ENCODE measurements at regions of chrX and their contacts with region 1.

Region 1: GRCh38 chrX:41180194-41180908 is 95.1 kb downstream of the USP9X start:
- DNase-seq: peak; percentile 69
- ATAC-seq: peak; percentile 68
- H3K4me3 ChIP-seq: peak overlapping the region in 1 of 5 experiments; percentile 15
- H3K4me3 Mint-ChIP-seq: peak overlapping the region; percentile 56
- H3K27ac ChIP-seq: peak overlapping the region; percentile 74 to 86
- H3K27ac Mint-ChIP-seq: peak overlapping the region; percentile 73
- H3K4me1 ChIP-seq: peaks cover 27 to 30% of the 10 kb centered on the region in 2 donors
- H3K4me1 Mint-ChIP-seq: peaks cover 43% of the 10 kb centered on the region
- H3K27me3 ChIP-seq: no peaks in the 10 kb centered on the region
- H3K27me3 Mint-ChIP-seq: no peaks in the 10 kb centered on the region
- CTCF ChIP-seq: peak; percentile 71

Region 2: GRCh38 chrX:41236629-41237028 is 56.3 kb after region 1 on chrX:
- CTCF ChIA-PET with region 1: interaction called, 7 read pairs
- POLR2A ChIA-PET with region 1: no interaction called
- intact Hi-C with region 1: loop called (anchors 5 kb)
- DNase-seq: peak; percentile 41
- ATAC-seq: no peak
- H3K4me3 ChIP-seq: no peak overlapping the region
- H3K4me3 Mint-ChIP-seq: no peak overlapping the region
- H3K27ac ChIP-seq: peak overlapping the region; percentile 10 to 48
- H3K27ac Mint-ChIP-seq: no peak overlapping the region
- H3K4me1 ChIP-seq: peaks cover 39 to 48% of the 10 kb centered on the region in 2 donors
- H3K4me1 Mint-ChIP-seq: peaks cover 35% of the 10 kb centered on the region
- H3K27me3 ChIP-seq: no peaks in the 10 kb centered on the region
- H3K27me3 Mint-ChIP-seq: no peaks in the 10 kb centered on the region
- CTCF ChIP-seq: no peak

Region 3: GRCh38 chrX:41259516-41259915 is 79.2 kb after region 1 on chrX:
- CTCF ChIA-PET with region 1: interaction called, 50 read pairs
- POLR2A ChIA-PET with region 1: no interaction called
- intact Hi-C with region 1: no loop called
- DNase-seq: no peak
- ATAC-seq: no peak
- H3K4me3 ChIP-seq: no peak overlapping the region
- H3K4me3 Mint-ChIP-seq: no peak overlapping the region
- H3K27ac ChIP-seq: no peak overlapping the region
- H3K27ac Mint-ChIP-seq: no peak overlapping the region
- H3K4me1 ChIP-seq: peaks cover 10% of the 10 kb centered on the region in 2 donors
- H3K4me1 Mint-ChIP-seq: peaks cover 11% of the 10 kb centered on the region
- H3K27me3 ChIP-seq: no peaks in the 10 kb centered on the region
- H3K27me3 Mint-ChIP-seq: no peaks in the 10 kb centered on the region
- CTCF ChIP-seq: no peak

Region 4: GRCh38 chrX:41946989-41947612 is 766.8 kb after region 1 on chrX:
- CTCF ChIA-PET with region 1: no interaction called
- POLR2A ChIA-PET with region 1: no interaction called
- intact Hi-C with region 1: no loop called
- DNase-seq: no peak
- ATAC-seq: no peak
- H3K4me3 ChIP-seq: no peak overlapping the region
- H3K4me3 Mint-ChIP-seq: no peak overlapping the region
- H3K27ac ChIP-seq: no peak overlapping the region
- H3K27ac Mint-ChIP-seq: no peak overlapping the region
- H3K4me1 ChIP-seq: no peaks in the 10 kb centered on the region
- H3K4me1 Mint-ChIP-seq: no peaks in the 10 kb centered on the region
- H3K27me3 ChIP-seq: no peaks in the 10 kb centered on the region
- H3K27me3 Mint-ChIP-seq: no peaks in the 10 kb centered on the region
- CTCF ChIP-seq: no peak

Measured in B cell (primary cell).